ENCODE measurements at regions of chr3 and their contacts with region 1.

Region 1: GRCh38 chr3:152268555-152269425 is at the start of gene MBNL1:
- DNase-seq: peak; percentile 65 to 81 (median 78)
- H3K4me3 ChIP-seq: peak within 1 kb of the TSS; percentile 84
- H3K27ac ChIP-seq: peak within 1 kb of the TSS; percentile 95 to 97
- H3K4me1 ChIP-seq: peaks cover 7% of the 10 kb centered on the region
- H3K27me3 ChIP-seq: no peaks in the 10 kb centered on the region
- CTCF ChIP-seq: no peak
- EP300 ChIP-seq: peak; percentile 14
- POLR2A ChIP-seq: no peak
- total RNA-seq, gene MBNL1: 117 to 152 (median 127) TPM

Region 2: DNA sequence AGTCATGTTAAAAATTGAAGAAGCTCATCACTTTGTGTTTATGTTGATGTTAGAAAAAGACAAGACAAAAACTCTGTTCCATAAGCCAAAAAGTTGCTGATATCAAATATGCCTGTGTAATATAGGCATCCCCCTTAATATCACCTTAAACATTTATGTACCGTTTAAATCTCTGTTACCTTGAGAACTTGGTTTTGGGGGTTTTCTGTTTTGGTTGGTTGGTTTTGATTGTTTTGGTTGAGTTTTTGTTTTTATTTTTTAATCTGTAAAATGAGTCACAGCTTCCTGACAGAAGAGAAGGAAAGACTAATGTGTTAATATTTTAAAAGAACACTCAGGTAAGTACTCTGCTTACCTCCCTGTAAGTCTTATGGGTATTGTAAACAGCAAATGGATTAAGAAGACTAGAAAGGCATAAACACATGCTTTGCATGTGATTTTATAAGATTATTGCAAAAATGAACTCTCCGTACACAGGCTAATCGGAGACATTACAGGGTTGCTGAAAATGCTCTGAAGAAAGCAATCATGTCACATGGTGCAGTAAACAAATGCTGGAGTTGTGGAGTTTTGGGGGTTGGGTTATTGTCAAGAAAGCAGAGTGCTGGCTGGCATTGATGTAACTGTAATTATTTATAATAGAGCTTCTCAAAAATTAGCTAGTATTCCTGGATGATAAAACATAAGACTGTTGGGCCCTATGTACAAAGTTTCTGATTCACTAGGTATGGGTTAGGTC is 69.5 kb before region 1 on chr3:
- intact Hi-C with region 1: loop called in 1 of 4 experiments (anchors 2 kb)
- DNase-seq: no peak
- H3K4me3 ChIP-seq: no peak overlapping the region
- H3K27ac ChIP-seq: peak overlapping the region in 1 of 2 donors; percentile 67
- H3K4me1 ChIP-seq: peaks cover 2% of the 10 kb centered on the region
- H3K27me3 ChIP-seq: no peaks in the 10 kb centered on the region
- CTCF ChIP-seq: no peak
- EP300 ChIP-seq: no peak
- POLR2A ChIP-seq: no peak

Region 3: DNA sequence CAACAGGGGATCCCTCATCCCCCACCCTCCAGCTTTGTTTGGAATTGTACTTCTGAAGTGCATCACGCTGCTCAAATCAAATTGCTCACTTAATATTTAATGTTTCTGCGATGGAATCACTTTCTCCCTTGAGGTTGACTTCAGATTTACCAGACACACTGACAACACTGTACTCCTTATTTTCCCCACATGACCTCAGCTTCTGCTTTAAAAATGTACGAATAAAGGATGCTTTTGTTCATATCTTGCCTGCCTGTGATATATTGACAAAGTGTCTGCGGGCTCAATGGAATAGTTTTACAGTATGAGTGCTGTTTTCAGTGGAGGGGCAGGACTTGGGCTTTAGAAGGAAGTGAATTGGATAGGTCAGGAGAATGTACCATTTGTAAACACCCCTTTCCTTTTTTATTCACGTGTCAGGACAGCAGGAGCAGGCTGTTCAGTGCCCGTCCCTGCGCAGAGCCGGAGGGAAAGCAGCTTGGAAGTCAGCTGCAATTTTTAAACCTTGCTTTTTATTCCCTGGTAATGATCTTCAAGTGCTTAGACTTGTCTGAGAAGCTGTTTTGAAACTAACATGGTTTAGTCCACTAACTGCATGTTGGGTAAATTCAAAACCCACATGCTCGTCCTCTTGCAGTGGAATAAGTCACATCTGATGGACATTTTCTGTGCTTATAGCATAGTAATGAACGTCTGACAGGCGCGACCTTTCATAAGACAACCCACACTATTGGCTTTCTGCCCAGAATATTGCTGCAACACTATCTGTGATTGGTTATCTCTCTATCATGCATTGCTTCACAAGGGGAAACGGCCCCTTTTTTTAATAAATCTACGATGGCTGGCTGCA is 29.8 kb after region 1 on chr3:
- intact Hi-C with region 1: loop called in 1 of 4 experiments (anchors 2 kb)
- DNase-seq: peak; percentile 45 to 61 (median 54)
- H3K4me3 ChIP-seq: peak overlapping the region; percentile 39
- H3K27ac ChIP-seq: peak overlapping the region; percentile 69 to 83
- H3K4me1 ChIP-seq: peaks cover 5% of the 10 kb centered on the region
- H3K27me3 ChIP-seq: no peaks in the 10 kb centered on the region
- CTCF ChIP-seq: no peak
- EP300 ChIP-seq: peak; percentile 45
- POLR2A ChIP-seq: no peak

Region 4: DNA sequence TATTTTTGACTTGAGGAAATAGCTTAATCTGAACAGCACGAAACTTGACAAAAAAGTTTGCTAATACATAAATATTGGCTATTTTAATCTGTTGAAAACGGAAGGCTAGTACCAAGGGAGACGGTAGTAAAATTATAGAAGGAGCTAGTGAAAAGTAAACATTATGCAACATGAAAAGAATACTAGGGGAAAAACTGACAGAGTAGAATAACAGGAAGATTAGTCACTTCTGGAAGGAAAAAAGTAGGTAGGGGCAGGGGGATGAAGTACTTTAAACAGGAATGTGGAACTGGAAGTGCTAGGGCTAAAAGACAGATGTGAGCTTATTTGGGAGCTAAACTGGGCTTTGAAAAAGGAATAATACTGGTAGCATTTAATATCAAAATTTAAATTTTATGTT is 60.1 kb after region 1 on chr3:
- intact Hi-C with region 1: no loop called
- DNase-seq: no peak
- H3K4me3 ChIP-seq: no peak overlapping the region
- H3K27ac ChIP-seq: no peak overlapping the region
- H3K4me1 ChIP-seq: peaks cover 2% of the 10 kb centered on the region
- H3K27me3 ChIP-seq: no peaks in the 10 kb centered on the region
- CTCF ChIP-seq: no peak
- EP300 ChIP-seq: no peak
- POLR2A ChIP-seq: no peak

Region 5: DNA sequence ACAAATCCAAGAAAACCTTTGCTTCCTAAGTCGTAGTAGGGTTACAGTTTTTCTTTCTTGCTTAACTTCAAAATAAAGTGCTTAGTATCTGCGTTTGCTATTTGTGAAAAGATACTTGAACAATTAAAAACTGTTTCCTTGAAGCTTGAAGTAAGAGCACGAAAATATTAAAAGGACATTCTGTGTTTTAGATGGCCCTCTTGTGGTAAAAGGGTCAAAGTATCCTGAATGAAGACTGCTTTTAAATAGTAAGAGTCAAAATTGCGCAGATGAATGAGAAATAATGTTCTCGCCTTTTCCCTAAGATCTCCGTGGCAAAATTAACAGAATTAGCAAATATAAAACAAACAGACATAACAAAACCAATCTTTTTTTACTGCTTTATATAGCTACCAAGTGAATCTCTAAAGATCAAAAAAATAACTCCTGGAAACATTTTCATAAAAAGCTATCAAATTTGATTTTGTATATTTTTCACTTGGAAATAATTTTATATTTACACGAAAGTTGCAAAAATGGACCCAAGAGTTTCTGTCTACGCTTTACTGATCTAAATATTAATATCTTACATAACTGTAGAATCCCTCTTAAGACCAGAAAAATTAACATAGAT is 175.3 kb after region 1 on chr3:
- intact Hi-C with region 1: loop called in 1 of 4 experiments (anchors 10 kb)
- DNase-seq: no peak
- H3K4me3 ChIP-seq: no peak overlapping the region
- H3K27ac ChIP-seq: no peak overlapping the region
- H3K4me1 ChIP-seq: no peaks in the 10 kb centered on the region
- H3K27me3 ChIP-seq: no peaks in the 10 kb centered on the region
- CTCF ChIP-seq: peak; percentile 48 to 76 (median 57)
- EP300 ChIP-seq: no peak
- POLR2A ChIP-seq: no peak

Region 6: DNA sequence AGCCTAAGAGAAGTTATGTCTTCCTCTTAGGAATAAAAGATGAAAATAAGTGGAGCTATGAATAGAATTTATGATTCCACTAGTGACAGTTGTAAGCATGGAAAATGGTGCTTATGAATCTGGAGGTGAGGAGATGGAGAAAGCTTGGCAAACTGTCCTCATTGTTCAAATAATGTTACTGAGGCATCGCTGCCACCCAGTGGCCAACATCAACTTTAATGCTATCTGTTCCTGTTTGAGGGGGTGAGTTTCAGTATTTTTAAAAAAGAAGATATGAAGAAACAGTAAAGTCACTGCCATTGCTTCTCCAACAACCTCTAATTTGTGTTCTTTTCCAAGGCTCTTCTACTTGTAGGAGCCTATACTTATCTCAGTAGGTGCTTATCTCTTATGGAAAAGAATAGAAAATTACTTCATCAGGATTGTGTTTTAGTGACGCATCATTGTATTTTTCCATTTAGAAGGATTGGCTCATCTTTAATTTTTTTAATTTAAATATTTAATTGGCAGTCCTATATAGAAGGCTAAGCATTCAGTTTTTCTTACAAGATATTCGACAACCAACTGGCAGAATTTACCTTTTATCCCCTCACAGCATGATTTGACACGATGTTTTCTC is 305.8 kb after region 1 on chr3:
- intact Hi-C with region 1: no loop called
- DNase-seq: peak; percentile 72 to 85 (median 80)
- H3K4me3 ChIP-seq: no peak overlapping the region
- H3K27ac ChIP-seq: no peak overlapping the region
- H3K4me1 ChIP-seq: no peaks in the 10 kb centered on the region
- H3K27me3 ChIP-seq: no peaks in the 10 kb centered on the region
- CTCF ChIP-seq: peak; percentile 31 to 67 (median 62)
- EP300 ChIP-seq: no peak
- POLR2A ChIP-seq: no peak

Measured in ovary (tissue), 10 donors.